Naive thymus-derived CD4-positive, alpha-beta T cell (primary cell): ENCODE measurements at regions of chr15 and their contacts with region 1.

Region 1: GRCh38 chr15:94287794-94288246 is 56.5 kb downstream of the MCTP2 start:
- DNase-seq: peak in 4 of 9 donors; percentile 4 to 48 (median 12)
- ATAC-seq: peak; percentile 95
- H3K4me3 ChIP-seq: no peak overlapping the region
- H3K4me3 Mint-ChIP-seq: peak overlapping the region in 7 of 10 donors; percentile 3 to 86 (median 36)
- H3K27ac ChIP-seq: no peak overlapping the region
- H3K27ac Mint-ChIP-seq: peak overlapping the region in 2 of 9 donors; percentile 44 to 90
- H3K4me1 ChIP-seq: peaks cover 0 to 19% of the 10 kb centered on the region in 2 donors
- H3K4me1 Mint-ChIP-seq: peaks cover 11 to 55% (median 33%) of the 10 kb centered on the region in 7 donors
- H3K27me3 ChIP-seq: no peaks in the 10 kb centered on the region
- H3K27me3 Mint-ChIP-seq: no peaks in the 10 kb centered on the region

Region 2: DNA sequence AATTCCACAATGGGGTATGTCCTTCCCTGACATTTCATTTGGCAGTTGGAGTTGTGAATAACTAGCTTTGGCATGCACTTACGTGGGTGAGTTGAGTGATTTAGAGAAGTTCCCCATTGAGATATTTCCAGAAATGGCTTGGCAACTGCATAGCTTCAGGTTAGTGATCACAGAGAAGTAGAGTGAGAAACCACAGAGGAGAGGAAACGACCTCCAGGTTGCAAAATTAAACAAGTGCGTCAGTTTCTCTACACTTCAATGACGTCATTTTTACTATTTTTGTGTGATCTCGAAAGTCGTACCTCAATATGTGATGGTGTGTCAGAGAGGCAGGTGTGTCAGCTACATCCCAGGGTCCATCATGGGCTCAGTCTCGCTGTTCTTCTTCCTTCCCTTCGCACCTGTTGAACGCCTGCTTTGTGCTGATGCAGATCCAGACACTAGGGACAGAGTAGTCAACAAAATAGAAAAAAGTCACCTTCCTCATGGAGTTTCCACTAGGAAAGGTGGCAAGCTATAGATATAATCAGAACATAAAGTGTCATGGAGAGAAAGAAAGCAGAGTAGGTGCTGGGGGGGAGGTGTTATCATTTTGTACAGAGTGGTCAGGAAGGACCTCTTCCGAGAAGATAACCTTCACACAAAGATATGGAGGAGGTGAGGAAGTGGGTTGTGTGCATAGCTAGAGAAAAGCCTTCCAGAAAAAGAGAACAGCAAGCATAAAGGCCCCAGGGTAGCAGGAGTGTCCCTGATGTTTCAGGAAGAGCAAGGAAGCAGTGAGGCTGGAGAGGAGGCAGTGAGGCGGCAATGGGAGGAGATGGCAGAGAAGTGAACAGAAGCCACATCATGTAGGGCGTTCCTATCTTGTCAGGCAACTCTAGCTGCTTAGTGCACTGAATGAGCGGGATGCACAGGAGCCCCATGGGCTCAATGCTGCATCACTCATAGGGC is 19.2 kb after region 1 on chr15:
- CTCF ChIA-PET with region 1: no interaction called
- POLR2A ChIA-PET with region 1: no interaction called
- intact Hi-C with region 1: loop called in 1 of 2 experiments (anchors 2 kb)
- DNase-seq: no peak
- ATAC-seq: peak; percentile 61
- H3K4me3 ChIP-seq: peak overlapping the region; percentile 19
- H3K4me3 Mint-ChIP-seq: peak overlapping the region in 2 of 10 donors; percentile 10 to 54
- H3K27ac ChIP-seq: no peak overlapping the region
- H3K27ac Mint-ChIP-seq: peak overlapping the region in 2 of 9 donors; percentile 29 to 89
- H3K4me1 ChIP-seq: peaks cover 0 to 30% of the 10 kb centered on the region in 2 donors
- H3K4me1 Mint-ChIP-seq: peaks cover 6 to 61% (median 11%) of the 10 kb centered on the region in 7 donors
- H3K27me3 ChIP-seq: no peaks in the 10 kb centered on the region
- H3K27me3 Mint-ChIP-seq: no peaks in the 10 kb centered on the region